ENCODE measurements at regions of chr15 and their contacts with region 1.

Region 1: GRCh38 chr15:99902248-99902928 is 169.2 kb upstream of the LYSMD4 start:
- DNase-seq: no peak

Region 2: GRCh38 chr15:98276018-98276417 is 1626.4 kb before region 1 on chr15:
- intact Hi-C with region 1: loop called in 1 of 2 experiments (anchors 5 kb)
- DNase-seq: no peak

Region 3: DNA sequence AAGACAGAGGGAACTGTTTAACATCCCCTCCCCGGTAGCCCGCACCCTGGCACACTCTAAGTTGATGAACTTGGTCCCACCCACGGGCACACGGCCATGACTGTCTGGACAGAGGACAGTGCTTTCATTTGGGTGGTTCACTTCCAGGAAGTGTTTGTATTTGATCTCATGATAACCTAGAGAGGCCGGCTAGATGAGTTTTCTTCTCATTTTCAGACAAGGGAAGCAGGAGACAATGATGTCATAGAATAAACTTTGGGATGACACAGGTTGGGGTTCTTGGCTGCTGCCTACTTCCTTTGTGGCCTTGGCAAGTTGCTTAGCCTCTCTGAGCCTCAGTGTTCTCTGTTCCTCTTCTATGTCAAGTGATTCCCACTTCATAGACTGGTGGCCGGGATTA is 153.0 kb before region 1 on chr15:
- intact Hi-C with region 1: no loop called
- DNase-seq: no peak

Measured in posterior vena cava (tissue), 2 donors.